Activated CD4-positive, alpha-beta memory T cell treated with anti-CD3 and anti-CD28 coated beads for 36 hours (primary cell): ENCODE measurements at regions of chr16 and their contacts with region 1.

Region 1: DNA sequence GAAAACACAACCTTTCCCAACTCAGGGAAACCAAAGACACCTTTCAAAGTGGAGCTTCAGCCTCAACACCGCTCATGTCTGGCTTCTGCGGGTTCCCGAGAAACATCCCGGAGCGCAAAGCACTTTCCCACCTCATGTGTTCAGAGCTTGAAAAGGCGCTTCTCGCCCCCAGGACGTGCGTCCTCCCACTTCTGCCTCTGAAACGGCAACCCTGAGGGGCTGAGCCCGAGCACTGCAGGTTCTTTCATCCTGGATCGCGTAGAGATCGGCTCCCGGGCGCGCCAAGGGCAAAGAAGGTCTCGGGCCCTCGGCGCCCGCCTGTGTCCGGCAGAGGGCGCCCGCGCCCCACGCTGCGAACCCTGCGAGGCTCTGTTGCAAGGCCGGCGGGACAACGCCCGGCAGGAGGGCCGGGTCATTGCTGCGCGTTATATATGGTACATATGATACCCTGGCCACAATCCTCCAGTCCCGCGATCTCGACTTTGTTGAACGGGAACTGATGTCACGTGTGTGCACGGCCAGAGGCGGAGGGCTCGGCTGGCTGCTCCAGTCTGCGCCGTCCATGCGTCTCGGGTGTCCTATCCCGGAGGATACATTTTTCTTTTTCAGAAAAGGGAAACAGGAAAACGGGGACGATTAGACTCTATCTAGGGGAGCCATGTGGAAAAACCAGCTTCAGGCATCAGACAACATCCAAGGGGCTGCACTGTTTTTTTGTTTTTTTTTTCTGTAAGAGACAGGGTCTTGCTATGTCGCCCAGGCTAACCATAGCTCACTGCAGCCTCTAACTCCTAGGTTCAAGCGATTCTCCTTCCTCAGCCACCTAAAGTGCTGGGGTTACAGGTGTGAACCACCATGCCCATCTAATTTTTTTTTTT is 19.1 kb downstream of the COQ7 start:
- DNase-seq: peak; percentile 83
- H3K4me3 Mint-ChIP-seq: peak overlapping the region; percentile 42
- H3K27ac Mint-ChIP-seq: no peak overlapping the region
- H3K4me1 Mint-ChIP-seq: no peaks in the 10 kb centered on the region
- H3K27me3 Mint-ChIP-seq: peaks cover 8% of the 10 kb centered on the region

Region 2: DNA sequence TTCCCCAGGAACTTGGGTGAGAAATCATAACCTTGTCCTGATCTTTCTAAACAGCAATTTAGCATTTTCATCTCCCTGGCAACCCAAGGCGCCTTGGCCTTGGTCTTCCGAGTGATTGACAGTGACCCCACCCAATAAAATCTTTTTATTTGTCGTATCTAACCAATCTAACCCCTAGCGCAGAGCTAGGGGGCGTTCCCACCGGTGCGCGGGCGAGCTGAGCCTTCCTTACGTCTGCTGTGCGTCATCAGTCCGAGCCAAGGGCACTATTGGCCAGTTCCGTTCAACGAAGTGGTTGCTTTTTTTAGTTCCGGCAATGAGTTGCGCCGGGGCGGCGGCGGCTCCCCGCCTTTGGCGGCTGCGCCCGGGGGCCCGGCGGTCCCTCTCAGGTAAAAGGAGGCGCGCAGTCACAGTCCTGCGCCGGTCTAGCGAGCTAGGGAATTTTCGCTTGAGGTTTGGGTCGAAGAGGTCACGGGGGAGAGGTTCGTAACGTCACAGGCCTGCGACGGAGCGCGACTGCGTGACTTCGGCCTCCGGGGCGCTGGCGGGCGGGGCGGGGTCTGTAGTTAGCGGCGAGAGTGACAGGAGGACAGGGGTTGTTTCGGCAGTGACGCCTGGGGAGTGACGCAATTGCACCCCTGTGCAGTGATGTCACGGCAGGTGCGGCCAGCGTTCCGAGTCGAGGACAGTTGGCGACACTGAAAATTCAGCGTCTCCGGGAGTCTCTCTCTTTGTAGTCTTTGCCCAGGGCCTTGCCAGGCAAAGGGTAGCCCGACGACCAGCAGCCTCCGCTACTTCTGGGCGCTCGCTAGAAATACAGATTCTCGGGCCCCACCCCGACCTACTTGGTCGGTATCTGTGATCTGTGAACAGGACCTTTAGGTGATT is 19.0 kb before region 1 on chr16 and contains the start of gene COQ7:
- CTCF ChIA-PET with region 1: interaction called, 14 read pairs
- POLR2A ChIA-PET with region 1: interaction called, 5 read pairs
- intact Hi-C with region 1: no loop called
- DNase-seq: peak; percentile 99
- H3K4me3 Mint-ChIP-seq: peak within 1 kb of the TSS; percentile 91
- H3K27ac Mint-ChIP-seq: peak within 1 kb of the TSS; percentile 93
- H3K4me1 Mint-ChIP-seq: peaks cover 7% of the 10 kb centered on the region
- H3K27me3 Mint-ChIP-seq: no peaks in the 10 kb centered on the region
- total RNA-seq, gene COQ7: 14.1 to 15.2 TPM

Region 3: GRCh38 chr16:19118938-19119431 is 32.4 kb after region 1 on chr16:
- CTCF ChIA-PET with region 1: interaction called, 16 read pairs
- POLR2A ChIA-PET with region 1: no interaction called
- intact Hi-C with region 1: no loop called
- DNase-seq: peak; percentile 68
- H3K4me3 Mint-ChIP-seq: peak overlapping the region; percentile 67
- H3K27ac Mint-ChIP-seq: peak overlapping the region; percentile 87
- H3K4me1 Mint-ChIP-seq: peaks cover 32% of the 10 kb centered on the region
- H3K27me3 Mint-ChIP-seq: peaks cover 12% of the 10 kb centered on the region

Region 4: GRCh38 chr16:19179546-19180490 is 93.3 kb after region 1 on chr16:
- CTCF ChIA-PET with region 1: interaction called, 92 read pairs
- POLR2A ChIA-PET with region 1: no interaction called
- intact Hi-C with region 1: loop called (anchors 1 kb)
- DNase-seq: peak; percentile 62
- H3K4me3 Mint-ChIP-seq: no peak overlapping the region
- H3K27ac Mint-ChIP-seq: no peak overlapping the region
- H3K4me1 Mint-ChIP-seq: no peaks in the 10 kb centered on the region
- H3K27me3 Mint-ChIP-seq: peaks cover 15% of the 10 kb centered on the region

Region 5: DNA sequence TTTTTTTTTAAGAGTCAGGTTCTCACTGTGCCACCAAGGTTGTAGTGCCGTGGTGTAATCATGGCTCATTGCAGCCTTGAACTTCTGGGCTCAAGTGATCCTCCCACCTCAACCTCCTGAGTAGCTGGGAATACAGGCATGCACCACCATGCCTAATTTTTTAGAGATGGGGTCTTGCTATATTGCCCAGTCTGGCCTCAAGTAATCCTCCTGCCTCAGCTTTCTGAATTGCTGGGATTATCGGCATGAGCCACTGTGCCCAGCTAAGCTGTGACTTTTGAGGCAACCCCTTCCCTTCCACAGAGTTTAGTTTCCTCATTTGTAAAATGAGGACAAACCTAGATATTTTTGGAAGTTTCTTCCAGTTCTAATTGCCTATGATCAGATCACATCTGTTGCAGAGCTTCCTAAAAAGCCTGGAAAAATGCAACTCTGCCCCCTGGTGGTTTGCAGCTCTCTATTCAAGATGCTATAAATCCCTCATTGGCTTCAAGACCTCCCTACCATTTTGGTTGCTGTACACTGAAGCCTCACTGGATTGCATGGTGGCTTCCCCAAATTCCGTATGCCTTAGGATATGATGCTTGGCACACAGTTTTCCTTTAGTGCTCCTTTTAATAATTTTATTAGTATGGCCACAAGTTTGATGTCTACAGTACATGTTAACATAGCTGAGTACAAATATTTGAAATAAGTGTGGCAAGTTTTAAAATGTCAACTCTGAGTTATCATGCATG is 416.0 kb after region 1 on chr16:
- CTCF ChIA-PET with region 1: interaction called, 55 read pairs
- POLR2A ChIA-PET with region 1: no interaction called
- intact Hi-C with region 1: loop called (anchors 1 kb)
- DNase-seq: peak; percentile 76
- H3K4me3 Mint-ChIP-seq: no peak overlapping the region
- H3K27ac Mint-ChIP-seq: no peak overlapping the region
- H3K4me1 Mint-ChIP-seq: no peaks in the 10 kb centered on the region
- H3K27me3 Mint-ChIP-seq: no peaks in the 10 kb centered on the region

Region 6: DNA sequence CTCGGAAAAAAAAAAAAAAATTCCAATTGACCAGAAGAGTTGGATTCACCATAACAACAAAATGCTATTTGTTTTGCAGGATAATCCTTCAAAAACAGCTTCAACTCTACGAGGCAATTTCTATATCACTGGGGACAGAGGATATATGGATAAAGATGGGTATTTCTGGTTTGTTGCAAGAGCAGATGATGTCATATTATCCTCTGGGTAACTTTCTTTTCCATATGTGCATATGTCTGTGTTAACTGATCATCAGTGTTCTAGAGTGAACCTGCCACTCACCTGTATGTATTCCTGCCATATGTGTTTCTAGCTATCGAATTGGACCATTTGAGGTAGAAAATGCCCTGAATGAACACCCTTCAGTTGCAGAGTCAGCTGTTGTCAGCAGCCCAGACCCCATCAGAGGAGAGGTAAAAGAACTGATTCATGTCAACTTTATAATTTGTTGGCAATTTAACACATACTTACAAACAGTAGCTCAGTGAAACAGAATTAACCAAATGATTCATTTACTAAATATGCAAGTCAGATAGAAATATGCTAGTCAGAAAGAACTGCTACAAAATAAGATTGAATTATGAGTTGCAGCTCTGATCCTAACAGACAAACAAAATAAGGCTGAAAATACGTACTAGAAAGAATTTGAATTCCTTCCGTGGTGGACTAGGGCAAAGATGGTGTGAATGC is 1705.5 kb after region 1 on chr16:
- CTCF ChIA-PET with region 1: no interaction called
- POLR2A ChIA-PET with region 1: no interaction called
- intact Hi-C with region 1: no loop called
- DNase-seq: no peak
- H3K4me3 Mint-ChIP-seq: no peak overlapping the region
- H3K27ac Mint-ChIP-seq: no peak overlapping the region
- H3K4me1 Mint-ChIP-seq: no peaks in the 10 kb centered on the region
- H3K27me3 Mint-ChIP-seq: no peaks in the 10 kb centered on the region